Astrocyte of the cerebellum (primary cell): ENCODE measurements at regions of chr6 and their contacts with region 1.

Region 1: GRCh38 chr6:146931208-146931607 is 273.0 kb upstream of the STXBP5 start:
- DNase-seq: no peak
- H3K4me3 ChIP-seq: no peak overlapping the region
- CTCF ChIP-seq: no peak

Region 2: GRCh38 chr6:146850238-146850896 is 80.8 kb before region 1 on chr6:
- in situ Hi-C with region 1: loop called (anchors 5 kb)
- DNase-seq: peak; percentile 24
- H3K4me3 ChIP-seq: no peak overlapping the region
- CTCF ChIP-seq: no peak

Region 3: DNA sequence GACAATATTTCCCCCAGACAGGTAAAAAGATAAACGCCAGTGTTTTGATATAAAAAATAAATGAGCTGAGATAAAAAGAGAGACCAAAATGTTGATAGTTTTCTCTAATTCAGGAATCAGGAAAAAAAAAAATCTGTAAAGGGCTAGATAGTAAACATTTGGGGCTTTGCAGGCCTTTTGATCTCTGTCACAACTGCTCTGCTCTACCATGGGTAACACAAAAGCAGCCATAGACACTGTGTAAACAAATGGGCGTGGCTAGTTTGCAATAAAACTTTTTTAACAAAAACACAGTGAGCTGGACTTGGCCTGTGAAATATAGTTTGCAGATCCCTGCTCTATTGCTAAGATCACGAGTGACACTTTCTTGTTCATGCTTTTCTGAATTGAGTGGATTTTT is 53.9 kb after region 1 on chr6:
- in situ Hi-C with region 1: no loop called
- DNase-seq: no peak
- H3K4me3 ChIP-seq: no peak overlapping the region
- CTCF ChIP-seq: no peak

Region 4: DNA sequence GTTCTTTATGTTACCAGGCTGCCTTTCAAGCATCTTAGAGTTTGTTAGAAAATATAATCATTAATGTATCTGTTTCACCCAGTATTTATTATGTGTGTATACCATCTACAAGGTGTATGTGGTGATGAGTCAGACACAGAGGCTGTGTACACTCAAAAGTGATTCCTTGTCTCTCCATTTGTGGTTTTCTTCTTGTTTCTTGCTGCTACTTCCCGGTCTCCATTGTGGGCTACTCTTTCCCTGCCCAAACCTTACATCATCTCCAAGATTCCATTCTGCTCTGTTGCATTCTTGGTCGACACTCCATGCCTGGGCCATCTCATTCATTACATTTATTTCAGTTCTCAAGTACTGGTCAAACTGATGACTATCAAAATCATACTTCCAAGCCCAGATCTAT is 90.8 kb after region 1 on chr6:
- in situ Hi-C with region 1: no loop called
- DNase-seq: peak; percentile 70
- H3K4me3 ChIP-seq: no peak overlapping the region
- CTCF ChIP-seq: no peak